ENCODE measurements at regions of chr17 and their contacts with region 1.

Region 1: DNA sequence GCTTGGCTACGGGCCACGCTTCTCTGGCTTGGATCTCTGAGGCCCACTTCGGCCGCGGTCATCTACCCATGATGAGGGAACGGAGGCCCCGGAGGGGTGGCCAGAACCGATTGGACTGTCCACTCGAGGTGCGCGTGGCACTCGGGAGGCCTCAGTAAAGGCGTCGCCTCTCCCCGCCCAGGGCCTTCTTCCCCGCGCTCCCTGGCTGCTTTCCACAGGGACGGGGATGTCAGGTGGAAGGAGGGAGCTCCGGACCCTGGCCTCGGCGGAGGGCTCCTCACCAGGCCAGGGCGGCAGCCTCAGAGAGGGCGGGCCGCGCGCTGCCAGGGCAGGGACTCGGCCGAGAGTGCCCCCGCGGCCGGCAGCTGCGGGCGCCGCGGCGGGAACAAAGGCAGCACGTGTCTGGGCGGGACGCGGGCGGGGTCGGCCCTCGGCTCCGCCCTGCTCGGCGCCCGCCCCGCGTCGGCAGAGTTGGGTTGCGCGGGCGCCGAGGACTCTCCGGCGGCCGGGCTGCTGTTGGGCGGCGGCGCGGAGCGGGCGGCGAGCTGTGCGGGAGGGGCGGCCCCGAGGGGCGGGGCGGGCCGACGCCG is 587 bp upstream of the CDK5R1 start:
- DNase-seq: peak; percentile 92
- H3K4me3 Mint-ChIP-seq: peak overlapping the region; percentile 66
- H3K27ac Mint-ChIP-seq: peak overlapping the region; percentile 40
- H3K4me1 Mint-ChIP-seq: peaks cover 27% of the 10 kb centered on the region
- H3K27me3 Mint-ChIP-seq: no peaks in the 10 kb centered on the region

Region 2: DNA sequence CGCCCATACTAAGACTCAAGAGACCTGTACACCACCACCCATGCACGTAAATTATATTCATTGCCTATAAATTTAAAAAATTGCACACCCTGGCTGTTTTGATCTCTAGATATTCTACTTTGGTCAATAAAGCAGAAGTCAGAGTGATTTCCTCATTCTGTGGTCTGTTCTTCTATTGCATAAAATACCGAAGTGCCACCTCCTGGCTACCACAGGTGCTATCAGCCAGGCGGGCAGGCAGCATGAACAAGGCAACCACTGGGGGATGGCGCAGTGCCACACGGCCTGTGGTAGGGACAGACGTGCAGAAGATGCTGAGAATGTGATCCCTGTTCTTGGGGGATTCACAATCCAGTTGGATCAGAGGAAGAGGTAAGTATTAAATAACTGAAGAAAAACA is 122.9 kb after region 1 on chr17:
- intact Hi-C with region 1: loop called (anchors 1 kb)
- DNase-seq: peak; percentile 88
- H3K4me3 Mint-ChIP-seq: no peak overlapping the region
- H3K27ac Mint-ChIP-seq: no peak overlapping the region
- H3K4me1 Mint-ChIP-seq: peaks cover 6% of the 10 kb centered on the region
- H3K27me3 Mint-ChIP-seq: peaks cover 3% of the 10 kb centered on the region